ENCODE measurements at regions of chr19 and their contacts with region 1.

Region 1: DNA sequence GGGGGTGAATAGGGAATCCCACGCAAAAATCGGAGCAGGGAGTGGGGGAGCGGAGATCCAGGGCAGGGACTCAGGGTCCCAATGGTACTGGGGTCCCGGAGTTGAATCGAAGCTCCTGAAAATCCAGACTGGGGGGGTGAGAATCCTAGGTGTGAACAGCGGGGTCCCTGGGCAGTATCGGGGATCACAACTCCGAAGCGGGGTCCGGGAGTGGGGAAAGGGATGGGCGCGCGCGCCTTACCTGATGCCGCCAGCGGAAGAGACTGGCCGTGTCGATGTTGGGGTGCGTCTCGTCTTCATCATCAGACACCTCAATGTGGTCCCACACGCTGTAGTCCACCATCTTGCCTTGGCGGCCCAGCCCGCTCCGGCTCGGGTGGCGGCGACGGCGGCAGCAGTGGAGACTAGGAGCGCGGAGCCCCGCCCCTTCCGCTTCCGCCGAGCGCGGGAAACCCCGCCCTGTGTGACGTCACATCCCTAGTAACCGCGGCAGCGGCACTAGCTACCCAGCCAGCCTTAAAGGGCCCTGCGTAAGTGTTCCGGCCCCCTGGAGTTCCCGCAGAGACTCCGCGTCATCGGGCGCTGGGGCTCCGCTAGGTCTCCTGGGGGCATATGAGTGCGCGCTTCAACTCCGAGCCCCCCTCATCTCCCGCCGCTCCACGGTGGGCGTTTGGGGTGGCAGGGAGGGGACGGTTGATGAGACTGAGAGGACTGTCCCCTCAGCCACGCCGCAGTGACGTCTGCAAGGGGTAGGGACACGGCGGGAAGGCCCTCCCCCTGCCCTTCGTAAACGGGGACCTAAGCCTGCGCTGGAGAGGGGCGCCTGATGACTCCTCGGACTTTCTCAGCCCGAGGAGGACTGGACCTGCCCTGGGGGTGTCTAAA is at the start of gene CDC37:
- DNase-seq: peak; percentile 99
- ATAC-seq: peak; percentile 78
- H3K4me3 ChIP-seq: peak within 1 kb of the TSS; percentile 87 to 98 (median 93)
- H3K4me3 Mint-ChIP-seq: peak within 1 kb of the TSS; percentile 94
- H3K27ac ChIP-seq: peak within 1 kb of the TSS; percentile 83 to 93
- H3K27ac Mint-ChIP-seq: peak within 1 kb of the TSS; percentile 91
- H3K4me1 ChIP-seq: peaks cover 49 to 86% of the 10 kb centered on the region in 2 donors
- H3K4me1 Mint-ChIP-seq: peaks cover 68% of the 10 kb centered on the region
- H3K27me3 ChIP-seq: no peaks in the 10 kb centered on the region
- H3K27me3 Mint-ChIP-seq: no peaks in the 10 kb centered on the region
- CTCF ChIP-seq: no peak
- total RNA-seq, gene CDC37: 178 and 193 TPM in 2 replicates

Region 2: GRCh38 chr19:10106100-10106936 is 297.1 kb before region 1 on chr19 and contains the start of gene PPAN:
- CTCF ChIA-PET with region 1: no interaction called
- POLR2A ChIA-PET with region 1: interaction called, 3 read pairs
- intact Hi-C with region 1: loop called (anchors 10 kb)
- DNase-seq: peak; percentile 98
- ATAC-seq: peak; percentile 60
- H3K4me3 ChIP-seq: peak within 1 kb of the TSS; percentile 4 to 71 (median 69)
- H3K4me3 Mint-ChIP-seq: peak within 1 kb of the TSS; percentile 92
- H3K27ac ChIP-seq: peak within 1 kb of the TSS; percentile 97 to 99
- H3K27ac Mint-ChIP-seq: peak within 1 kb of the TSS; percentile 99
- H3K4me1 ChIP-seq: peaks cover 53 to 73% of the 10 kb centered on the region in 2 donors
- H3K4me1 Mint-ChIP-seq: peaks cover 58% of the 10 kb centered on the region
- H3K27me3 ChIP-seq: no peaks in the 10 kb centered on the region
- H3K27me3 Mint-ChIP-seq: no peaks in the 10 kb centered on the region
- CTCF ChIP-seq: no peak
- total RNA-seq, gene PPAN: 80.5 and 88.0 TPM in 2 replicates

Region 3: DNA sequence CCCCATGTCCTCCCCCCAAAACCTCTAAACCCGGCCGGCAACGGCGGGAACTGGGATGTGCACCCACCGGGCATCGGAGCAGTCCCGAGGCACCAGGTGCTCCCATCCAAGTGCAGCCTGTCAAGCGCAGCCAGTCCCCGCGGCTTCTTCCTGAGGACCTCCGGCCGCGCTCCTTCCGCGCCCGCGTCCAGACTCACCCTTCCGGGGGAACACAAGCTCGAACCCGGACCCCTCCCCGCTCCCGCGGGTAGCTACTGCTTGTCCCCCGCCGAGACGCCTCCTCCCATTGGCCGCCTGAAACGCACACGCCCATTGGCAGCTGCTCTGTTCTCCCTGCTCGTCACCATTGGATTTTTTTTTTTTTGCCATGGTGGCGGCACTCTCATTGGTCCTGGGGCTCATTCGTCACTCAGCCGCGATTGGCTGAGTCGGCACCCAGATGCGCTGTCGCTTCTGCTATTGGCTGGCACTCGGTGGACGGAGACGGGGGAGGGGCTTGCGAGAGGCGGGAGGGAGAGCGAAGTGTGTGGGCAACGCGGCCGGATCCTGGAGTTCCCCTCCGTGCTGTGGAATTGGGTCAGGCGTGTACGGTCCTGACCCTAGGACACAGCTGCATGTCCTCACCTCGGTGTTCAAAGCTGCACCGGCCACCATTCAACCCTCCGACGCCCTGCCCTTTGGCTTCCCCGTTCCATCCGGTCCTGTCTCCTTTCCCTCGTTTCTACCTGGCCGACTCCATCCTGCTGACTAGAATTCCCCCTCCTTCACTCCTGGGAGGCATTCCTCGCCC is 22.9 kb before region 1 on chr19 and contains the start of gene TYK2:
- CTCF ChIA-PET with region 1: interaction called, 4 read pairs
- POLR2A ChIA-PET with region 1: interaction called, 5 read pairs
- intact Hi-C with region 1: loop called (anchors 1 kb)
- DNase-seq: peak; percentile 99
- ATAC-seq: peak; percentile 91
- H3K4me3 ChIP-seq: peak within 1 kb of the TSS; percentile 63 to 99 (median 90)
- H3K4me3 Mint-ChIP-seq: peak within 1 kb of the TSS; percentile 87
- H3K27ac ChIP-seq: peak within 1 kb of the TSS; percentile 78 to 91
- H3K27ac Mint-ChIP-seq: peak within 1 kb of the TSS; percentile 91
- H3K4me1 ChIP-seq: peaks cover 10 to 17% of the 10 kb centered on the region in 2 donors
- H3K4me1 Mint-ChIP-seq: peaks cover 21% of the 10 kb centered on the region
- H3K27me3 ChIP-seq: no peaks in the 10 kb centered on the region
- H3K27me3 Mint-ChIP-seq: no peaks in the 10 kb centered on the region
- CTCF ChIP-seq: no peak
- total RNA-seq, gene TYK2: 337 and 347 TPM in 2 replicates

Region 4: GRCh38 chr19:10424011-10424637 is 20.7 kb after region 1 on chr19:
- CTCF ChIA-PET with region 1: interaction called, 282 read pairs
- POLR2A ChIA-PET with region 1: interaction called, 15 read pairs
- intact Hi-C with region 1: loop called (anchors 2 kb)
- DNase-seq: peak; percentile 73
- ATAC-seq: peak; percentile 3
- H3K4me3 ChIP-seq: peak overlapping the region; percentile 19 to 66 (median 41)
- H3K4me3 Mint-ChIP-seq: peak overlapping the region; percentile 91
- H3K27ac ChIP-seq: no peak overlapping the region
- H3K27ac Mint-ChIP-seq: peak overlapping the region; percentile 95
- H3K4me1 ChIP-seq: peaks cover 78 to 85% of the 10 kb centered on the region in 2 donors
- H3K4me1 Mint-ChIP-seq: peaks cover 79% of the 10 kb centered on the region
- H3K27me3 ChIP-seq: peaks cover 0 to 52% (median 27%) of the 10 kb centered on the region in 4 experiments
- H3K27me3 Mint-ChIP-seq: peaks cover 30% of the 10 kb centered on the region
- CTCF ChIP-seq: peak; percentile 74

Region 5: DNA sequence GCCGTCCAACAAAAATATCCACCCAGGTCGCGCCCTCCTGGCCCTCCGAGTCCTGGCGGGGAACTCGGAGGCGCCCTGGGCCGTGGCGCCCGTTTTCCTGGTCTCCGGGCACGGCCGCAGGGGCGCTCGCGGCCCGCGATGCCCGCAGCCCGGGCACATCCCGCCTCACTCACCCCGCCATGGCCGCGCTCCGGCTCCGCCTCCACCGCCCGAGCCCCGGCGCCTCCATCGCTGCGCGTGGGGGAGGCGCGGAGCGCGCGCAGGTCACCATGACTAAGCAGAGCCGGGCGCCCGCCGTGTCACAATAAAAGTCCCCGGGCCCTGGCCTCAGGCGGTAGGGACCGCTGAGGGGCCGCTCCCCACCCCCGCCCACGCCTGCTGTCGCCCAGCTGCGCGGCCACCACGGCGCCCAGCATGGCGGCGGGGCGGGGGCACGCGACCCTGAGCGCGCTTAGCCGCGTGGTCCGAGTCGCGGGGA is 99.2 kb after region 1 on chr19:
- CTCF ChIA-PET with region 1: interaction called, 3 read pairs
- POLR2A ChIA-PET with region 1: interaction called, 3 read pairs
- intact Hi-C with region 1: loop called (anchors 5 kb)
- DNase-seq: peak; percentile 87
- ATAC-seq: peak; percentile 87
- H3K4me3 ChIP-seq: peak overlapping the region in 4 of 5 experiments; percentile 72 to 87 (median 78)
- H3K4me3 Mint-ChIP-seq: peak overlapping the region; percentile 88
- H3K27ac ChIP-seq: peak overlapping the region; percentile 63 to 69
- H3K27ac Mint-ChIP-seq: peak overlapping the region; percentile 85
- H3K4me1 ChIP-seq: peaks cover 6 to 18% of the 10 kb centered on the region in 2 donors
- H3K4me1 Mint-ChIP-seq: peaks cover 22% of the 10 kb centered on the region
- H3K27me3 ChIP-seq: no peaks in the 10 kb centered on the region
- H3K27me3 Mint-ChIP-seq: no peaks in the 10 kb centered on the region
- CTCF ChIP-seq: no peak

Region 6: DNA sequence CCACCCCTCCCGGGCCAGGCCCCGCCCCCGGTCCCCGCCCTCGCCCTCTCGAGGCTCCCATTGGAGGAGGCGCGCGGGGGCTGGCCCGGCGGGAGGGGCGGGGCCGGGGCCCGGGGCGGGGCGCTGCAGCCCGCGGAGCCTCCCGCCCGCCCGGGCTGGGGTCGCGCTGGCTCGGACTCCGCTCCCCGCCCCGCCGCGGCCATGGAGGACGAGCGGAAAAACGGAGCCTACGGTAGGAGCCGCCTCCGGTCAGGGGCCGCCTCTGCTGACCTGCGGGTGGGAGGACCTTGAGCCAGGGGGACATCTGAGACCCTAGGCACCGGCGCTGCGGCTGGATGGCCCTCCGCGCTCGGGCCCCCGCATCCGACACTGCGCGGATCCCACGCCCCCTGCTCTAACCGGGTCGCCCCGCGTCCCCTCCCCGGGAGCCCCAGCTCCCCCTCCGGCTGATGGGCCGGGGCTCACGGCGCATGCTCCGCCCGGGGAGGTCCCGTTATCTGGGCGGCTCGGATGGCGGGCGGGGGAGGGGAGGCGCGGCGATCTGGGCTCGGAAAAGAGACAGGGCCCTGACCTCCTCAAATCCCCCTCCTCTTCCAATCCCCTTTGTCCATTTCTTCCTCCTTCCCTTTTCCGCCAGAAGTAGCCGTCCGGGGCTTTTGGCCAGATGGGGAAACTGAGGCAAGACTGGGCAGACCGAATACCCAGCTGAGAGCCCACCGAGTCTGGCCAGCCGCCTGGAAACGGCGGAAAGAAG is 199.1 kb after region 1 on chr19:
- CTCF ChIA-PET with region 1: no interaction called
- POLR2A ChIA-PET with region 1: interaction called, 13 read pairs
- intact Hi-C with region 1: no loop called
- DNase-seq: peak; percentile 86
- ATAC-seq: peak; percentile 73
- H3K4me3 ChIP-seq: peak overlapping the region; percentile 89 to 100 (median 94)
- H3K4me3 Mint-ChIP-seq: peak overlapping the region; percentile 96
- H3K27ac ChIP-seq: peak overlapping the region; percentile 97 to 99
- H3K27ac Mint-ChIP-seq: peak overlapping the region; percentile 99
- H3K4me1 ChIP-seq: peaks cover 30 to 47% of the 10 kb centered on the region in 2 donors
- H3K4me1 Mint-ChIP-seq: peaks cover 37% of the 10 kb centered on the region
- H3K27me3 ChIP-seq: no peaks in the 10 kb centered on the region
- H3K27me3 Mint-ChIP-seq: no peaks in the 10 kb centered on the region
- CTCF ChIP-seq: no peak